Activated CD4-positive, alpha-beta T cell treated with anti-CD3 and anti-CD28 coated beads for 36 hours (primary cell): ENCODE measurements at regions of chr22 and their contacts with region 1.

Region 1: GRCh38 chr22:43346521-43346929 is 3.4 kb upstream of the SCUBE1 start:
- DNase-seq: peak; percentile 81
- ATAC-seq: peak; percentile 67
- H3K4me3 Mint-ChIP-seq: no peak overlapping the region
- H3K27ac Mint-ChIP-seq: no peak overlapping the region
- H3K4me1 Mint-ChIP-seq: peaks cover 8% of the 10 kb centered on the region
- H3K27me3 Mint-ChIP-seq: peaks cover 38% of the 10 kb centered on the region

Region 2: DNA sequence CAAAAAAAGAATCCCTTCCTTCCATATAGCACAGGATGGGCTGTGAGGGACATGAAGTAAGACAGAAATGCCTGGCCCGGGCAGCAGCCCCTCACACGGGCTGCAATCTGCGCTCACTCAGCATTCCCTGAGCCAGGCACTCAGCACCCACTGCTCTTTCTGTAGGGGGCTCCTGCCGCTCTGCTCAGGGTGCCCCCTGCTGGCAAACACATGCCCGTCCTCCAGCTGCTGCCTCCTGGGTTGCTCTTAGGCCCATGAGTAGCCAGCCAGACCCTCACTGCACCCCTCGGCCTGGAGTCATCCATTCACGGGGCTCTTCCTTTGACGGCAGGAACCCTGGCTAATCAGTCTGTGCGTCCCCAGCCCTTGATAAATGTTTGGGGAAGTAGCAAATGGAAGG is 210.3 kb before region 1 on chr22:
- CTCF ChIA-PET with region 1: no interaction called
- POLR2A ChIA-PET with region 1: no interaction called
- intact Hi-C with region 1: no loop called
- DNase-seq: peak; percentile 41
- ATAC-seq: no peak
- H3K4me3 Mint-ChIP-seq: no peak overlapping the region
- H3K27ac Mint-ChIP-seq: no peak overlapping the region
- H3K4me1 Mint-ChIP-seq: peaks cover 4% of the 10 kb centered on the region
- H3K27me3 Mint-ChIP-seq: no peaks in the 10 kb centered on the region

Region 3: DNA sequence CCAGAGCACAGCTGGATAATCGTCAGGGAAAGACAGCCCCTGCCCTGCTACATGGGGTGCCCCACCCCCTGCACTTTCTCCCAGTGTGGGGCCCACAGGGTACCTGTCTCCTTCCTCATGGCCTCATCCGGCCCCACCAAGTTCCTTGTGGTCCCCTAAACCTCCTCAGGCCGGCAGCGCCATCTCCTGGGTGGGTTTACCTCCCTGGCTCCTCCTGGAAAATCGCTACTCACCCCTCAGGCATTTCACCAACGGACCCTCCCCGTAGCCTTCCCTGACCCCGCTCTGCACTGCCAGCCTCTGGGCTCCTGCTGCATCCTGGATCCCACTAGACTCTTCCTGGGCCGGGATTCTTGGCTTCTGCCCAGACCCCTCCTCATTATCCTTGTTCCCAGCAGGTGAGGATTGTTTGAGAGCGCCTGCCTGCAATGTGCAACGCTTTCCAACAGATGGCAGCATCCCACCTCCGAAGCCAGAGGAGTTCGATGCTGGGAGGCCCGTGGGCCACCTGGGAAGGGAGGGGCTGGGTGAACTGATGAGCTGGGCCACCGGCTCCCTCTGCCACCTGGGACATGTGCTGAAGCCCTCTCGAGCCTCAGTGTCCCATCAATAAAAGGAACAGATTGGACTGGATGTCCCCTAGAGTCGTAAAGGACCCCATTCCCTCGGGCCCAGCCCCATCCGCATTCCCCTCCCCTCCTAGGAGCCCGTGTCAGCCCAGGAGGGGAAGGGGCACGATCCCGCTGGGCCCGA is 115.4 kb before region 1 on chr22:
- CTCF ChIA-PET with region 1: interaction called, 38 read pairs
- POLR2A ChIA-PET with region 1: no interaction called
- intact Hi-C with region 1: loop called (anchors 1 kb)
- DNase-seq: peak; percentile 83
- ATAC-seq: peak; percentile 89
- H3K4me3 Mint-ChIP-seq: no peak overlapping the region
- H3K27ac Mint-ChIP-seq: no peak overlapping the region
- H3K4me1 Mint-ChIP-seq: peaks cover 4% of the 10 kb centered on the region
- H3K27me3 Mint-ChIP-seq: peaks cover 3% of the 10 kb centered on the region

Region 4: DNA sequence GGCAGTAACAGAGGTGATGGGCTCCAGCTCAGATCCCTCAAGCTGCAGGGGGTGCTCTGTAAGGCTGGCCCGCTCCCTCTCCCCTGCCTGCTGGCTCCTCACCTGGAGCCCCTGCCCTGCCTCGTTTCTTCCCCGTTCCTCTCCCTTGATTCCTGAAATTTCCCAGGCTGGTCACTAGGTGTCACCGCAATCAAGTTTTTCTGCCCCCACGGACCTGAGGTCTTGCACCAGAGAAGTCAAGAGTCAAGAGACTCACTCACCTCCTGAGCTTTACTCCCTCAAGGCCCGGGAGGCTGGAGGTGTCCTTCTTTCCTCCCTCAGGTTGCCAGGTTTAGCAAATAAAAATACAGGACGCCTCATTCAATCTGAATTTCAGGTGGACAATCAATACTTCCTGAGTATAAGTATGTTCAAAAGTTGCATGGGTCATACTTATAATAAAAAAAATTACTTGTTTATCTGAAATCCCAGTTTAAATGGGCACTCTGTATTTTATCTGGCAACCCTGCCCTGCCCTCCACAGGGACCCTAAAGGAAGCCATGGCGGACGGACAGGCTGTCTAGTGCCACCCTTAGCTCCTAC is 72.5 kb before region 1 on chr22:
- CTCF ChIA-PET with region 1: interaction called, 36 read pairs
- POLR2A ChIA-PET with region 1: no interaction called
- intact Hi-C with region 1: loop called (anchors 1 to 5 kb)
- DNase-seq: peak; percentile 60
- ATAC-seq: peak; percentile 71
- H3K4me3 Mint-ChIP-seq: no peak overlapping the region
- H3K27ac Mint-ChIP-seq: no peak overlapping the region
- H3K4me1 Mint-ChIP-seq: no peaks in the 10 kb centered on the region
- H3K27me3 Mint-ChIP-seq: no peaks in the 10 kb centered on the region

Region 5: GRCh38 chr22:43320943-43321900 is 25.3 kb before region 1 on chr22:
- CTCF ChIA-PET with region 1: no interaction called
- POLR2A ChIA-PET with region 1: no interaction called
- intact Hi-C with region 1: no loop called
- DNase-seq: peak; percentile 18
- ATAC-seq: no peak
- H3K4me3 Mint-ChIP-seq: no peak overlapping the region
- H3K27ac Mint-ChIP-seq: no peak overlapping the region
- H3K4me1 Mint-ChIP-seq: no peaks in the 10 kb centered on the region
- H3K27me3 Mint-ChIP-seq: no peaks in the 10 kb centered on the region

Region 6: GRCh38 chr22:43624144-43624998 is 277.8 kb after region 1 on chr22:
- CTCF ChIA-PET with region 1: no interaction called
- POLR2A ChIA-PET with region 1: no interaction called
- intact Hi-C with region 1: no loop called
- DNase-seq: no peak
- ATAC-seq: no peak
- H3K4me3 Mint-ChIP-seq: no peak overlapping the region
- H3K27ac Mint-ChIP-seq: no peak overlapping the region
- H3K4me1 Mint-ChIP-seq: no peaks in the 10 kb centered on the region
- H3K27me3 Mint-ChIP-seq: no peaks in the 10 kb centered on the region